A673 (cell line): ENCODE measurements at regions of chr11 and their contacts with region 1.

Region 1: GRCh38 chr11:110429731-110430266 is at the start of gene FDX1:
- DNase-seq: peak; percentile 96
- H3K4me3 ChIP-seq: peak within 1 kb of the TSS; percentile 91
- H3K27ac ChIP-seq: peak within 1 kb of the TSS; percentile 93
- H3K4me1 ChIP-seq: peaks cover 44% of the 10 kb centered on the region
- H3K27me3 ChIP-seq: no peaks in the 10 kb centered on the region
- CTCF ChIP-seq: peak; percentile 52
- total RNA-seq, gene FDX1: 59.5 and 62.3 TPM in 2 replicates

Region 2: GRCh38 chr11:109845437-109845836 is 584.4 kb before region 1 on chr11:
- CTCF ChIA-PET with region 1: no interaction called
- POLR2A ChIA-PET with region 1: no interaction called
- intact Hi-C with region 1: loop called (anchors 5 kb)
- DNase-seq: peak; percentile 95
- H3K4me3 ChIP-seq: no peak overlapping the region
- H3K27ac ChIP-seq: peak overlapping the region; percentile 66
- H3K4me1 ChIP-seq: peaks cover 54% of the 10 kb centered on the region
- H3K27me3 ChIP-seq: no peaks in the 10 kb centered on the region
- CTCF ChIP-seq: no peak

Region 3: GRCh38 chr11:109926941-109927340 is 502.9 kb before region 1 on chr11:
- CTCF ChIA-PET with region 1: no interaction called
- POLR2A ChIA-PET with region 1: no interaction called
- intact Hi-C with region 1: no loop called
- DNase-seq: no peak
- H3K4me3 ChIP-seq: no peak overlapping the region
- H3K27ac ChIP-seq: no peak overlapping the region
- H3K4me1 ChIP-seq: no peaks in the 10 kb centered on the region
- H3K27me3 ChIP-seq: no peaks in the 10 kb centered on the region
- CTCF ChIP-seq: no peak

Region 4: DNA sequence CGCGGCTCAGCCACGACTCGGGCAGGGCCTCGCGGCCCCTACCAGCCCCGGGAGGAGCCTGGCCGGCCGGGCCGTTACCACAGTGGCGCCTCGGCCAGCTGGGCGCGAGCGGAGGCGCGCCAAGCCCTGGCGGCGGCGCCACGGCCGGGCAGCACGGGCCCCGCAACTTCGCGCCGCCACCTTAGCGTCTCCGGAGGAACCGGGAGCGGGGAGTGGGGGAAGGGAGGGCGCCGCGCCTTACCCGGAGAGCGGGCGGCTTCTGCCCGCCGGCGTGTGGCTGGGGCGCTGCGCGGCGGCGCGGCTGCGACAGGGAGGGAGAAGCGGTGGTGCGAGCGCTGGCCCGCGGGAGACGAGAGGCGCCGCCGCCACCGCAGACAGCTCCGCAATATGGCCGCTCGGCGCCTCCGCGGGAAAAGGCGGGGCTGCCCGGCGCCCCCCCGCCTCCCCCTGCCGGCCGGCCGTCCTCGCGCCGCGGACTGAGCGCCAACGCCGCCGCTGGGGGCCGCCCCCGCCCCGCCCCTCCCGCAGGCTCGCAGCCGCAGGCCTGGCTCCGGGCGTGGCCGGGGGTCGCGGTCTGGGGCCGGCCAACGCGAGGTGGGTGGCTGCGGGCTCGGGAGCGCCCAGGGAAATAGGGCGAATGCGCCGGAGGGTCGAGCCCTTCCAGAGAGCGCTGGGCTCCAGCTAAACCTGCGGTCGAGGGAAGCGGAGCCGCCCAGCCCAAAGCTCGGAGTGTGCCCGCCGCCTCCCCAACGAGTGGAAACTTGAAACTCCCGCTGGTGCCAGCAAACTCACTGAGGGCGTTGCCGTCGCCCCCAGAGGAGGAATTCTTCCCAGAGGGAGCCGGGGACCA is 133.3 kb before region 1 on chr11 and contains the start of gene RDX:
- CTCF ChIA-PET with region 1: no interaction called
- POLR2A ChIA-PET with region 1: no interaction called
- intact Hi-C with region 1: loop called (anchors 5 kb)
- DNase-seq: peak; percentile 97
- H3K4me3 ChIP-seq: peak within 1 kb of the TSS; percentile 86
- H3K27ac ChIP-seq: peak within 1 kb of the TSS; percentile 97
- H3K4me1 ChIP-seq: peaks cover 20% of the 10 kb centered on the region
- H3K27me3 ChIP-seq: no peaks in the 10 kb centered on the region
- CTCF ChIP-seq: no peak
- total RNA-seq, gene RDX: 381 and 395 TPM in 2 replicates

Region 5: GRCh38 chr11:110376711-110377324 is 53.0 kb before region 1 on chr11:
- CTCF ChIA-PET with region 1: interaction called, 4 read pairs
- POLR2A ChIA-PET with region 1: no interaction called
- intact Hi-C with region 1: loop called (anchors 1 kb)
- DNase-seq: peak; percentile 100
- H3K4me3 ChIP-seq: peak overlapping the region; percentile 11
- H3K27ac ChIP-seq: peak overlapping the region; percentile 83
- H3K4me1 ChIP-seq: peaks cover 59% of the 10 kb centered on the region
- H3K27me3 ChIP-seq: no peaks in the 10 kb centered on the region
- CTCF ChIP-seq: peak; percentile 98

Region 6: GRCh38 chr11:112074026-112074811 is 1644.4 kb after region 1 on chr11 and contains the start of gene NKAPD1:
- CTCF ChIA-PET with region 1: no interaction called
- POLR2A ChIA-PET with region 1: interaction called, 13 read pairs
- intact Hi-C with region 1: no loop called
- DNase-seq: peak; percentile 96
- H3K4me3 ChIP-seq: peak within 1 kb of the TSS; percentile 93
- H3K27ac ChIP-seq: peak within 1 kb of the TSS; percentile 98
- H3K4me1 ChIP-seq: peaks cover 11% of the 10 kb centered on the region
- H3K27me3 ChIP-seq: no peaks in the 10 kb centered on the region
- CTCF ChIP-seq: 0 out of 2 replicates have a peak, but pooled peaks have one; percentile 16
- total RNA-seq, gene NKAPD1: 30.4 and 32.8 TPM in 2 replicates